Activated B cell treated with CpG ODN at 0.5 μM for 24 hours (primary cell): ENCODE measurements at regions of chr1 and their contacts with region 1.

Region 1: DNA sequence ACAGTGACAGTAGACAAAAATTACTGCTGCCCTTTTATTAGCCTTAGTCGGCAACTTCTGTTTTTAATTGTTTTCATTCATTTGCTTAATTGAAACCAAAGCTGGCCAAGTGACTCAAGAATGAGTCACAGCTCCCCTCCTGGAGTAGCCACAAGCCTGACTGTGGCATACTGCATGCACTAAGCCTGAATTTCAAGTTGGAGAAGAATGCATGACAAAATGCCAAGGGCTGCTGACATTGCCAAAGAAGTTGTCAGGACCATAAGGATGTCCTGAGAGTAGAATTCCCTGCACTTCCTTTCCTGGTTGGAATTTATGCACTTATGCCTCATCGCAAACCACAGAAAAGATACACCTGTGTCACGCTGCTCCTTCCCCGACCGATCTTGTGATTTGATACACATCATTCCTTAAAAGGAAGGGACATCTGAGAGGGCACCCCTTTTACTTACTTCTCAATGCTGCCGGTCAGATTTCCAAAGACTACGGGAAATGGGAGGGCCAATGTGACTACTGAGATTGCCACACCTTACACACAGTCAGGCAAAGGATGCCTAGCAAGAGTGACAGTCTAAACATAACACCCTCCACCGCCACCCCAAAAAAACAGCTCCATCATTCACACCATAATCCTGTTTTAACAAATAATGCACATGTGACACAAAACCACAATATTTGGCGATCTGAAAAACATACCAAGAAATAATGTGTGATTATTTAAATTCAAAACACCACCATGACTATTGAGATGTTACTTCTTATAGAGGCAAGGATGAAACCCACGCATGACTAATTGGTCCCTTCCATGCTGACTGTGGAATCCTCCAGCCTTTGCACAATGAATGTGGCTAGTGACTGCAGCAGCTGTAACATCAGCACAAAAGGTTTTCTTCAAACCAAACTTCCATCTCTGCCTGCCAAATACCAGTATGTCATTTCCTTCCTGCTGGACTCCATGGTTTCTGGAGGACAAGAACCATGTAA is 28.2 kb downstream of the VAV3 start:
- DNase-seq: no peak
- ATAC-seq: peak; percentile 51
- H3K4me3 Mint-ChIP-seq: peak overlapping the region; percentile 69
- H3K27ac Mint-ChIP-seq: peak overlapping the region; percentile 70
- H3K4me1 Mint-ChIP-seq: peaks cover 87% of the 10 kb centered on the region
- H3K27me3 Mint-ChIP-seq: no peaks in the 10 kb centered on the region
- CTCF ChIP-seq: no peak

Region 2: DNA sequence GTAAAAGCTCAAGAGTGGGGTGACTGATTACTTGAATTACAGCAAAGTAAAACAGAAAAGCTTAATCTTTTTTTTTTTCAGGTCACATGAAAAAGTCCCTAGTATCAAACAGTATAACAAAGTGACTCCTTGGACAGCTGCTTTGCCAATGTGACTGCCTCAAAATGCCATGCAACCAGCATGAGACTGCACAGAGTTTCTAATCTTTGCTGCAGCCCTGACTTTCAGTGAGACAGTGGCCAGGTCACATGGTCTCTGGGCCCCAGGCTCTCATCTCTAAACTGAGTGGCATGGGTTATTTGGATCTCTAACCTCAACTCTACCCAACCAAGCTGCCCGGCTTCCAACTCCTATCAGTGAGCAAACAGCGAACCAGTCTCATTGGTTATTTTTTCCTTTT is 140.8 kb before region 1 on chr1:
- CTCF ChIA-PET with region 1: interaction called, 3 read pairs
- POLR2A ChIA-PET with region 1: interaction called, 6 read pairs
- intact Hi-C with region 1: loop called (anchors 1 kb)
- DNase-seq: no peak
- ATAC-seq: peak; percentile 68
- H3K4me3 Mint-ChIP-seq: peak overlapping the region; percentile 73
- H3K27ac Mint-ChIP-seq: peak overlapping the region; percentile 90
- H3K4me1 Mint-ChIP-seq: peaks cover 80% of the 10 kb centered on the region
- H3K27me3 Mint-ChIP-seq: no peaks in the 10 kb centered on the region
- CTCF ChIP-seq: no peak

Region 3: DNA sequence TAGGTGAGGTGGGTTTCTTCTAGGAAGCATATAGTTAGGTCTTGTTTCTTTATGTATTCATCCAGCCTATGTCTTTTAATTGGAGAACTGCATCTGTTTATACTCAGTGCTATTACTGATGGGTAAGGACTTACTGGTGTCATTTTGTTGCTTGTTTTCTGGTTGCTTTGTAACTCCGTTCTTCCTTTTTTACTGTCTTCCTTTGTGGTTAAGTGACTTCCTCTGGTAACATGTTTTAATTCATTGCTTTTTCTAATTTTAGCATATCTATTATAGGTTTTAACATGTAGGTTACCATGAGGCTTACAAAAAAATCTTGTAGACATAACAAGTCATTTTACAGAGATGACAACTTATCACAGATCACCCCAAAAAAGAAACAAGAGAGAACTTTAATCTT is 132.7 kb before region 1 on chr1:
- CTCF ChIA-PET with region 1: no interaction called
- POLR2A ChIA-PET with region 1: no interaction called
- intact Hi-C with region 1: loop called (anchors 2 kb)
- DNase-seq: no peak
- ATAC-seq: peak; percentile 35
- H3K4me3 Mint-ChIP-seq: peak overlapping the region; percentile 80
- H3K27ac Mint-ChIP-seq: peak overlapping the region; percentile 96
- H3K4me1 Mint-ChIP-seq: peaks cover 94% of the 10 kb centered on the region
- H3K27me3 Mint-ChIP-seq: no peaks in the 10 kb centered on the region
- CTCF ChIP-seq: no peak

Region 4: GRCh38 chr1:107877092-107877491 is 59.7 kb before region 1 on chr1:
- CTCF ChIA-PET with region 1: no interaction called
- POLR2A ChIA-PET with region 1: no interaction called
- intact Hi-C with region 1: loop called (anchors 1 kb)
- DNase-seq: no peak
- ATAC-seq: peak; percentile 70
- H3K4me3 Mint-ChIP-seq: peak overlapping the region; percentile 62
- H3K27ac Mint-ChIP-seq: peak overlapping the region; percentile 75
- H3K4me1 Mint-ChIP-seq: peaks cover 87% of the 10 kb centered on the region
- H3K27me3 Mint-ChIP-seq: no peaks in the 10 kb centered on the region
- CTCF ChIP-seq: no peak

Region 5: GRCh38 chr1:107926436-107927080 is 10.2 kb before region 1 on chr1:
- CTCF ChIA-PET with region 1: no interaction called
- POLR2A ChIA-PET with region 1: interaction called, 5 read pairs
- intact Hi-C with region 1: loop called (anchors 1 kb)
- DNase-seq: no peak
- ATAC-seq: no peak
- H3K4me3 Mint-ChIP-seq: no peak overlapping the region
- H3K27ac Mint-ChIP-seq: peak overlapping the region; percentile 15
- H3K4me1 Mint-ChIP-seq: peaks cover 65% of the 10 kb centered on the region
- H3K27me3 Mint-ChIP-seq: no peaks in the 10 kb centered on the region
- CTCF ChIP-seq: no peak

Region 6: GRCh38 chr1:107976836-107977235 is 40.0 kb after region 1 on chr1:
- CTCF ChIA-PET with region 1: no interaction called
- POLR2A ChIA-PET with region 1: no interaction called
- intact Hi-C with region 1: no loop called
- DNase-seq: no peak
- ATAC-seq: no peak
- H3K4me3 Mint-ChIP-seq: no peak overlapping the region
- H3K27ac Mint-ChIP-seq: no peak overlapping the region
- H3K4me1 Mint-ChIP-seq: peaks cover 22% of the 10 kb centered on the region
- H3K27me3 Mint-ChIP-seq: no peaks in the 10 kb centered on the region
- CTCF ChIP-seq: no peak

Region 7: DNA sequence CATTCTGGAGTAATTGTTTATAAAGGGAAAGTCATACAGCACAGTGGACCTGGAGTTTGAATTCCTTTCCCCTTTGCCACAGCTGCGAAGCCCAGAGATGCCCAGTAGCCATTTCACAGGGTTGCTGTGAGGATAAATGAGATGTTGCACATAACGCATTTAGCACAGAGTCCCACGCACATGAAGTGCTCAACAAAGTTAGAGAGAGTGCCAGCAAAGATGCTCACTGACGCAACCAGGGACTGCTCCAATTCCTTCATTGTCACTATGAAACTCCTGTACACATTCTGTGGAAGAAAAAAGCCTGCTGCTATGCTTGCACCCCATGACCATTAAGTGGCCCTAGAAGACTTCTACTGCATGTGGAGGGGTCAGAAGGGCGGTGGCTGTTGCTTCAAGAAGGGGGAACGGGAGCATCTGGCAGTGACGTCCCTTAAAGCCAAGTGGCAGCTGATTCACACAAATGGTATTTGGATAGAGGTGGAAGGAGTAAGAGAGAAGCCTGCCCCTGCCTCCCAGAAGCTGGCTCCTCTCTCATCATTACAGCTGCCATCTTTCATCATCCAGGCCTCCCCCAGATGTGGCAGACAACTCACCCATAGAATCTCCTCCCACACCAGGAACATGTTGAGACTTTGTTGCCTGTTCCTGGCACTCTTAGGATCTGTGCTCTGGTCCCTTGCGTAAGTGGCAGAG is 54.7 kb after region 1 on chr1:
- CTCF ChIA-PET with region 1: no interaction called
- POLR2A ChIA-PET with region 1: no interaction called
- intact Hi-C with region 1: no loop called
- DNase-seq: no peak
- ATAC-seq: no peak
- H3K4me3 Mint-ChIP-seq: no peak overlapping the region
- H3K27ac Mint-ChIP-seq: no peak overlapping the region
- H3K4me1 Mint-ChIP-seq: no peaks in the 10 kb centered on the region
- H3K27me3 Mint-ChIP-seq: no peaks in the 10 kb centered on the region
- CTCF ChIP-seq: no peak

Region 8: GRCh38 chr1:108041360-108042142 is 104.8 kb after region 1 on chr1:
- CTCF ChIA-PET with region 1: no interaction called
- POLR2A ChIA-PET with region 1: no interaction called
- intact Hi-C with region 1: loop called (anchors 2 kb)
- DNase-seq: no peak
- ATAC-seq: peak; percentile 54
- H3K4me3 Mint-ChIP-seq: peak overlapping the region; percentile 55
- H3K27ac Mint-ChIP-seq: peak overlapping the region; percentile 82
- H3K4me1 Mint-ChIP-seq: peaks cover 39% of the 10 kb centered on the region
- H3K27me3 Mint-ChIP-seq: no peaks in the 10 kb centered on the region
- CTCF ChIP-seq: no peak